PC-3 (cell line): ENCODE measurements at regions of chr19 and their contacts with region 1.

Region 1: GRCh38 chr19:10403137-10404021 is at the start of gene CDC37:
- DNase-seq: peak; percentile 99
- ATAC-seq: peak; percentile 83
- H3K4me3 ChIP-seq: peak within 1 kb of the TSS; percentile 98
- H3K27ac ChIP-seq: peak within 1 kb of the TSS; percentile 17
- H3K4me1 ChIP-seq: peaks cover 21% of the 10 kb centered on the region
- H3K27me3 ChIP-seq: no peaks in the 10 kb centered on the region
- CTCF ChIP-seq: no peak
- total RNA-seq, gene CDC37: 560 and 709 TPM in 2 replicates

Region 2: GRCh38 chr19:10424011-10424637 is 20.7 kb after region 1 on chr19:
- CTCF ChIA-PET with region 1: interaction called, 7 read pairs
- POLR2A ChIA-PET with region 1: no interaction called
- intact Hi-C with region 1: loop called (anchors 1 kb)
- DNase-seq: peak; percentile 93
- ATAC-seq: peak; percentile 91
- H3K4me3 ChIP-seq: peak overlapping the region; percentile 71
- H3K27ac ChIP-seq: no peak overlapping the region
- H3K4me1 ChIP-seq: peaks cover 24% of the 10 kb centered on the region
- H3K27me3 ChIP-seq: peaks cover 31% of the 10 kb centered on the region
- CTCF ChIP-seq: peak; percentile 94

Region 3: DNA sequence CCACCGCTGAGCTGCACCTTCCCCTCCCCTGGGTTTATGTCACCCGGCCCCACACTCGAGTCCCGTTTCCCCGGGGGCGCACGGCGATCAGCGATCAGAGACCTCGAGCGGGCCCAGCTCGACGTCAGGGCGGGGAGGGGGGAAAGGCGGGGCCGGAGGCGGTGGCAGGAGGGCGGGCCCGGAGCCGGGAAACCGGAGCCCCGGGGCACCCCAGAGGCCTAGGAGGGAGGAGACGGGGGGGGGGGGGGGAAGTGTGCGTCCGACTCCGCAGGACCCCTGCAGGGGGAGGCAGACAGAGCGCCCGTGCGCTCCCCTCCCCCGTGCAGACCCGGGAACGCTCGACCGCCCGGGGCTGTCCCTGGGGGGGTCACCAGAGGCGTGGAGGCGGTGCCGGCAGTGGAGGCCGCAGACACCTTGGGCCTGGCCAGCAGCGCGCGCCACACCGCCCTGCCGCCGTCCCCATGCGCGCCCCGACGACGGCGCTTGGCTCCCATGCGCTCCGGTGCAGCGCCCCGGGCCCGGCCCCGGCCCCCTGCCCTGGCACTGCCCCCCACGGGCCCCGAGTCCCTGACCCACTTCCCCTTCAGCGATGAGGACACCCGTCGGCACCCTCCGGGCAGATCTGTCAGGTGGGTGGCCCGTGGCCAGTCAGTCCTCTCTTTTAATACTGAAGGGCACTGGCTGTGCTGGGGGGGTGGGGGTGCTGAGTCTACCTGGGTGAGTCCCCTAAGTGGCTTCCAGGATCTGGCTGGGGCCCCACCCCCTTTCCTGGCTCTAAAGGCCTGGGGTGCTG is 28.8 kb after region 1 on chr19:
- CTCF ChIA-PET with region 1: no interaction called
- POLR2A ChIA-PET with region 1: no interaction called
- intact Hi-C with region 1: loop called (anchors 1 kb)
- DNase-seq: peak; percentile 42
- ATAC-seq: peak; percentile 58
- H3K4me3 ChIP-seq: peak overlapping the region; percentile 56
- H3K27ac ChIP-seq: no peak overlapping the region
- H3K4me1 ChIP-seq: peaks cover 25% of the 10 kb centered on the region; the same call in 1 of the 2 replicates
- H3K27me3 ChIP-seq: peaks cover 21% of the 10 kb centered on the region
- CTCF ChIP-seq: no peak

Region 4: DNA sequence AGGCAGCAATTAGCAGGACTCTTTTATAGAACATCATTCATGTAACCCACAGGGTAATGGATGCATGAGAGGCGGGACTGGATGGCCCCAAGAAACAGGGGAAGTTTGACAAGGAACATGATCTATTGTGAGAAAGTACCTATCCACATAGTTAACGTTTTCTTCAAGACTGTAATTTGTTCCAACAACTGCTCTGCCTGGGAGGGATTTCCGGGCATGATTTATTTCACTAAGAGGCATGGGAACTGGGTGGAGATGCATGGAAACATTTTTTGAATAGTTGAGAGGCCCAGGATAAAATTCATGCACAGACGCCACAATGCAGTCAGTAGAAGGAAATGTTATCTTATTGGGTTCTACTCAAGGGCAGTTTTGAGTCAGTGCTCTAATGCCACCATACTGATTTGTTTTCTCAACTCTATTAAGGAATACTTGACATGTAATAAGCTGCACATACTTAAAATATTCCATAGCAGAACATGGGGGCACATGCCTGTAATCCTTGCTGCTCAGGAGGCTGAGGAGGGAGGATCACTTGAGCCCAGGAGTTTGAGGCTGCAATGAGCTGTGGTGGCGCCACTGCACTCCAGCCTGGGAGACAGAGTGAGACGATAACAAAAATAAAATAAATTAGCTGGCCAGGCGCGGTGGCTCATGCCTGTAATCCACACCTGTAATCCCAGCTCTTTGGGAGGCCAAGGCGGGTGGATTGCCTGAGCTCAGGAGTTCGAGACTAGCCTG is 130.4 kb after region 1 on chr19:
- CTCF ChIA-PET with region 1: no interaction called
- POLR2A ChIA-PET with region 1: no interaction called
- intact Hi-C with region 1: no loop called
- DNase-seq: no peak
- ATAC-seq: no peak
- H3K4me3 ChIP-seq: no peak overlapping the region
- H3K27ac ChIP-seq: no peak overlapping the region
- H3K4me1 ChIP-seq: no peaks in the 10 kb centered on the region
- H3K27me3 ChIP-seq: no peaks in the 10 kb centered on the region
- CTCF ChIP-seq: no peak

Region 5: GRCh38 chr19:10568826-10569651 is 165.7 kb after region 1 on chr19 and contains the start of gene CDKN2D:
- CTCF ChIA-PET with region 1: no interaction called
- POLR2A ChIA-PET with region 1: no interaction called
- intact Hi-C with region 1: loop called (anchors 2 kb)
- DNase-seq: peak; percentile 100
- ATAC-seq: peak; percentile 87
- H3K4me3 ChIP-seq: peak within 1 kb of the TSS; percentile 72
- H3K27ac ChIP-seq: peak within 1 kb of the TSS; percentile 84
- H3K4me1 ChIP-seq: peaks cover 32% of the 10 kb centered on the region
- H3K27me3 ChIP-seq: no peaks in the 10 kb centered on the region
- CTCF ChIP-seq: no peak
- total RNA-seq, gene CDKN2D: 17.1 and 22.5 TPM in 2 replicates